Activated CD4-positive, alpha-beta memory T cell treated with anti-CD3 and anti-CD28 coated beads, Interleukin-2, amount 10 ng/mL, durations not matched to agents 7 days and 5 days (primary cell): ENCODE measurements at regions of chr6 and their contacts with region 1.

Region 1: GRCh38 chr6:11232193-11232769 is at the start of gene NEDD9:
- DNase-seq: peak; percentile 97
- H3K4me3 Mint-ChIP-seq: peak within 1 kb of the TSS; percentile 86
- H3K27ac Mint-ChIP-seq: peak within 1 kb of the TSS; percentile 99
- H3K4me1 Mint-ChIP-seq: peaks cover 70% of the 10 kb centered on the region
- H3K27me3 Mint-ChIP-seq: no peaks in the 10 kb centered on the region
- total RNA-seq, gene NEDD9: 60.1 to 64.8 TPM

Region 2: DNA sequence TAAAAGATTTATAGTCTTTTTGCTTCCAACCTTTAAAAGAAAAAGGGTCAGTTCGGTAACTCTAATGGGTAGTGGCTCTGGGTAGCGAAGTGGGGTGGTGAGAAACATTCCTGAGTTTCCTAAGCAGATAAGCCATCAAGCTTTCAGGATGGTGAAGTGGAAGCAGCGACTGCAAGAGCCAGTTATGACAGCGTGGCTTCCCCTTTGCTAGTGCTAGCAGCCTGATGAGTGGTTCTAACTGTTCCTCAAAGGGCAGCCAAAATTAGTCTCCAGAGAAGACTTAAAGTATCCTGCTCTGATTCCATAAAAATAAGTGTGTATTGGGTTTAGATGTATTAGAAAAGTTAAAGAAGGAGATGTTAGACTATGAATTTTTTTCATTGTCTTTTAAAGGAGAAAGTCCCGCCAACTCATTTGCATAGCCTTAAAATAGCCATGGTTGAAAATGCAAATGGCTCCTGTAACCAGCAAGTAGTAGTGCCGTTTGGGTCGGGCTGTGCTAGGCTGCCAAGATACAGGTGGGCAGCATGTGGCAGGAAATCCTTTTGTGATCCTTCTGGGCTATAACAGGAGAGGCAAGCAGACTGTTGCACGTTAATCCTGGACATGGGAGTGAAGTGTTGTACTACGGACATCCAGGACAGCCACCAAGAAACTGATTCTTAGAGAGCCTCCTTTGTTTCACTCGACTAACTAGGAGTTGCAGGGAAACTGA is 206.2 kb before region 1 on chr6:
- CTCF ChIA-PET with region 1: no interaction called
- POLR2A ChIA-PET with region 1: no interaction called
- DNase-seq: no peak
- H3K4me3 Mint-ChIP-seq: no peak overlapping the region
- H3K27ac Mint-ChIP-seq: no peak overlapping the region
- H3K4me1 Mint-ChIP-seq: no peaks in the 10 kb centered on the region
- H3K27me3 Mint-ChIP-seq: peaks cover 45% of the 10 kb centered on the region

Region 3: GRCh38 chr6:11198663-11199603 is 33.3 kb before region 1 on chr6:
- CTCF ChIA-PET with region 1: interaction called, 5 read pairs
- POLR2A ChIA-PET with region 1: interaction called, 42 read pairs
- DNase-seq: peak; percentile 54
- H3K4me3 Mint-ChIP-seq: peak overlapping the region; percentile 46
- H3K27ac Mint-ChIP-seq: peak overlapping the region; percentile 84
- H3K4me1 Mint-ChIP-seq: peaks cover 71% of the 10 kb centered on the region
- H3K27me3 Mint-ChIP-seq: no peaks in the 10 kb centered on the region

Region 4: DNA sequence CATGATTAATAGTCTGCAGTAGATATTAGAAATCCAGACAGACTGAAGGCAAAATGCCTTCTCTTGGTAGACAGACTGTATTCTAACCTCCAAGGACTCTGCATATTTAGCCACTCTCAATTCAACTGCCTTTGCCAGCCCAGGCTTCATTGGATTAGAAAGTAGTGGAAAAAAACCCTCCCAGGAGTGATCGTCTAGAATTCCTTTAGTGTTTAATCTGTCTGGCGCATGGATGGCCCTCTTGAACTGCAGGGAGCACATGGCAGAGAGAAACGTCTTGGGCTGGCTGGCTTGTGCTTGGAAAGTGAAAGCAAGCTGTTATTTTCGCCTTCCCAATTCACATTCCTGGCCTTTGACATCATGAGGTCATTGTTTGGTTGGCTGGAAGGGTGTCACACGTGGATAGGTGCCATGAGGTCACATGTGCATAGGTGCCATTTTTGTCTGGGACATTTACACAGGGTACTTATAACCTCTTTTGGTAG is 31.1 kb after region 1 on chr6:
- CTCF ChIA-PET with region 1: interaction called, 8 read pairs
- POLR2A ChIA-PET with region 1: interaction called, 79 read pairs
- DNase-seq: no peak
- H3K4me3 Mint-ChIP-seq: no peak overlapping the region
- H3K27ac Mint-ChIP-seq: no peak overlapping the region
- H3K4me1 Mint-ChIP-seq: peaks cover 41% of the 10 kb centered on the region
- H3K27me3 Mint-ChIP-seq: no peaks in the 10 kb centered on the region

Region 5: GRCh38 chr6:11366183-11366933 is 134.1 kb after region 1 on chr6:
- CTCF ChIA-PET with region 1: no interaction called
- POLR2A ChIA-PET with region 1: interaction called, 21 read pairs
- DNase-seq: peak; percentile 64
- H3K4me3 Mint-ChIP-seq: peak overlapping the region; percentile 12
- H3K27ac Mint-ChIP-seq: peak overlapping the region; percentile 62
- H3K4me1 Mint-ChIP-seq: peaks cover 74% of the 10 kb centered on the region
- H3K27me3 Mint-ChIP-seq: no peaks in the 10 kb centered on the region